Activated CD4-positive, alpha-beta T cell treated with anti-CD3 and anti-CD28 coated beads, Interleukin-2, amount 10 ng/mL, durations not matched to agents 7 days and 5 days (primary cell): ENCODE measurements at regions of chr1 and their contacts with region 1.

Region 1: GRCh38 chr1:203038891-203039608 is 12.8 kb downstream of the PPFIA4 start:
- DNase-seq: peak; percentile 66
- H3K4me3 Mint-ChIP-seq: no peak overlapping the region
- H3K27ac Mint-ChIP-seq: no peak overlapping the region
- H3K4me1 Mint-ChIP-seq: peaks cover 1% of the 10 kb centered on the region
- H3K27me3 Mint-ChIP-seq: no peaks in the 10 kb centered on the region

Region 2: DNA sequence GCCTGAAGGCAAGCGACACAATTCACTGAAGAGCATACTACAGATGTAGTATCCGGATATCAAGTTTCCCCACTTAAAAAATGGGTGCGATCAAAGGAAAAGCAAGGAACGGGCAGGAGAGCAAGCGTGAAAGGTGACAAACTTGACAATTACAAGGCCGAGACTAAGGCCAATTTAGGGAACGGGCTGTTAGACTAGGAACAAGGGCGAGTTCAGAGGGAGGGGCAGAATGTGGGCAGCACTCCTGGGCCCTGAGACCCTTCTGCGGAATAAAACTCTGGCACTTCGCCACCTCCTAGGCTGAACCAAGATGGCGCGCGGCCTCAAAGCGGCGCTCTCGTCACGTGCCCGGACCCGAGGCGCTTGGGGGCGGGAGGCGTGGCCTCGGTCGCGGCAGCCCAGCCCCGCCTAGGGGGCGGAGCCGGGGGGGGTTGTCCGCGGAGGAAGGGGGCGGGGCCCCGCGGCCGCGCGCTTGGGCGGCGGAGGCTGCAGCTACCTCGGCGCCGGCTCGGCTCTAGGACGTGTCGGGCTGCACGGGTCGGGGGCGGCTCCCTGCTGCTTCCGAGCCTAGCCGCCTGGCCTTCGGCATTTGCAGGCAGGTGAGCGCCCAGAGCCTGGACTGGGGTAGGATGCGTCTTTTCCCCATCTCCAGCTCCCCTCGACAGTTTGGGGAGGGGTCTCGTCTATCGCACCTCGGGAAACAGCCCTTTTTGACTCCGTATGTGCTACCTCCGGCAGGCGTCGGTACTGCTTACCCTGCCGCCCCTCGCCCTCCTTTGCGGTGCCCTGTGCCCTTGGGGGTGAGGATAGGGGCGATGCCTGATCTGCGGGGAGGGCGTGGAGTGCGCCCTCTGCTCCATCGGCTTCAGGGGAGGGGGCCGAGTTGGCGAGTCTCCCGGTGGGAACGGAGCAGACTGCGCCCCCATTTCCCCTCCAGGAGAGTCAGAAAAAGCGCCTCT is 12.7 kb before region 1 on chr1 and contains the start of gene PPFIA4:
- CTCF ChIA-PET with region 1: interaction called, 25 read pairs
- POLR2A ChIA-PET with region 1: no interaction called
- DNase-seq: peak; percentile 86
- H3K4me3 Mint-ChIP-seq: peak within 1 kb of the TSS; percentile 67
- H3K27ac Mint-ChIP-seq: peak within 1 kb of the TSS; percentile 83
- H3K4me1 Mint-ChIP-seq: peaks cover 21% of the 10 kb centered on the region
- H3K27me3 Mint-ChIP-seq: peaks cover 2% of the 10 kb centered on the region
- total RNA-seq, gene PPFIA4: 13.7 to 16.1 TPM

Region 3: GRCh38 chr1:203051841-203052324 is 12.8 kb after region 1 on chr1:
- CTCF ChIA-PET with region 1: interaction called, 22 read pairs
- POLR2A ChIA-PET with region 1: no interaction called
- DNase-seq: no peak
- H3K4me3 Mint-ChIP-seq: no peak overlapping the region
- H3K27ac Mint-ChIP-seq: no peak overlapping the region
- H3K4me1 Mint-ChIP-seq: peaks cover 2% of the 10 kb centered on the region
- H3K27me3 Mint-ChIP-seq: no peaks in the 10 kb centered on the region

Region 4: GRCh38 chr1:203172128-203173010 is 133.3 kb after region 1 on chr1:
- CTCF ChIA-PET with region 1: interaction called, 16 read pairs
- POLR2A ChIA-PET with region 1: no interaction called
- DNase-seq: peak; percentile 65
- H3K4me3 Mint-ChIP-seq: no peak overlapping the region
- H3K27ac Mint-ChIP-seq: no peak overlapping the region
- H3K4me1 Mint-ChIP-seq: no peaks in the 10 kb centered on the region
- H3K27me3 Mint-ChIP-seq: no peaks in the 10 kb centered on the region

Region 5: GRCh38 chr1:203216274-203217138 is 177.5 kb after region 1 on chr1:
- CTCF ChIA-PET with region 1: interaction called, 32 read pairs
- POLR2A ChIA-PET with region 1: no interaction called
- DNase-seq: peak; percentile 64
- H3K4me3 Mint-ChIP-seq: no peak overlapping the region
- H3K27ac Mint-ChIP-seq: no peak overlapping the region
- H3K4me1 Mint-ChIP-seq: no peaks in the 10 kb centered on the region
- H3K27me3 Mint-ChIP-seq: peaks cover 3% of the 10 kb centered on the region